Activated T-helper 2 cell treated with anti-CD3 and anti-CD28 coated beads, Interferon-gamma antibody, Interleukin-2, Interleukin-4, amounts not matched to agents 10 μg/mL and 5 μg/mL and 100 μg/mL, durations not matched to agents 14 hours and 24 hours and 36 hours (primary cell): ENCODE measurements at regions of chr2 and their contacts with region 1.

Region 1: DNA sequence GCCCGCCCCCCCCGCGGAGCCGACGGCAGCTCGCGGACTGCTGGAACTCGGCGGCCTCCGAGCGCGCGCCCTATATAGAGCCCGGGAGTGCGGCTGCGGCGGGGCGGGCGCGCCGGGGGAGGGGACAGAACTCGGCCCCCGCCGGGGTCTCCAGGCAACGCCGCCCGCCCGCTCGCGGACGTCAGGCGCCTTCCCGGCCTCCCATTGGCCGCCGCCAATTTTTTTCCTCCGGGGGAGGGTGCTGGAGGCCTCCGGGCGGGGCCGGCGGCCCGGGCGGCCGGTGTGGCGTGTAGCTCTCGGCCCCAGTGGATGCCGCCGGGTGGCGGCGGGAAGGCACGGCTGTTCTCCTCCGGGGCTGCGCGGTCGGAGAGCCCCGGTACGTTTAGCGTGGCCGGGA is at the start of gene ZFP36L2:
- DNase-seq: peak; percentile 95
- H3K4me3 Mint-ChIP-seq: peak within 1 kb of the TSS; percentile 90
- H3K27ac Mint-ChIP-seq: peak within 1 kb of the TSS; percentile 95
- H3K4me1 Mint-ChIP-seq: peaks cover 30% of the 10 kb centered on the region
- H3K27me3 Mint-ChIP-seq: no peaks in the 10 kb centered on the region
- total RNA-seq, gene ZFP36L2: 114 TPM in 2 replicates

Region 2: GRCh38 chr2:42810121-42810970 is 416.2 kb before region 1 on chr2:
- intact Hi-C with region 1: loop called (anchors 5 kb)
- DNase-seq: peak; percentile 94
- H3K4me3 Mint-ChIP-seq: peak overlapping the region; percentile 95
- H3K27ac Mint-ChIP-seq: peak overlapping the region; percentile 100
- H3K4me1 Mint-ChIP-seq: peaks cover 21% of the 10 kb centered on the region
- H3K27me3 Mint-ChIP-seq: no peaks in the 10 kb centered on the region

Region 3: GRCh38 chr2:42944779-42945415 is 281.7 kb before region 1 on chr2:
- intact Hi-C with region 1: loop called (anchors 2 kb)
- DNase-seq: no peak
- H3K4me3 Mint-ChIP-seq: no peak overlapping the region
- H3K27ac Mint-ChIP-seq: no peak overlapping the region
- H3K4me1 Mint-ChIP-seq: peaks cover 3% of the 10 kb centered on the region
- H3K27me3 Mint-ChIP-seq: peaks cover 2% of the 10 kb centered on the region

Region 4: GRCh38 chr2:43158259-43158880 is 68.2 kb before region 1 on chr2:
- intact Hi-C with region 1: loop called (anchors 1 kb)
- DNase-seq: peak; percentile 58
- H3K4me3 Mint-ChIP-seq: peak overlapping the region; percentile 74
- H3K27ac Mint-ChIP-seq: peak overlapping the region; percentile 99
- H3K4me1 Mint-ChIP-seq: peaks cover 39% of the 10 kb centered on the region
- H3K27me3 Mint-ChIP-seq: no peaks in the 10 kb centered on the region

Region 5: GRCh38 chr2:43276962-43277391 is 50.4 kb after region 1 on chr2:
- intact Hi-C with region 1: no loop called
- DNase-seq: no peak
- H3K4me3 Mint-ChIP-seq: no peak overlapping the region
- H3K27ac Mint-ChIP-seq: no peak overlapping the region
- H3K4me1 Mint-ChIP-seq: peaks cover 12% of the 10 kb centered on the region
- H3K27me3 Mint-ChIP-seq: no peaks in the 10 kb centered on the region

Region 6: GRCh38 chr2:43484323-43484930 is 257.9 kb after region 1 on chr2:
- intact Hi-C with region 1: loop called (anchors 1 kb)
- DNase-seq: no peak
- H3K4me3 Mint-ChIP-seq: no peak overlapping the region
- H3K27ac Mint-ChIP-seq: no peak overlapping the region
- H3K4me1 Mint-ChIP-seq: peaks cover 26% of the 10 kb centered on the region
- H3K27me3 Mint-ChIP-seq: no peaks in the 10 kb centered on the region

Region 7: GRCh38 chr2:43773876-43774613 is 547.5 kb after region 1 on chr2 and contains the start of gene DYNC2LI1:
- intact Hi-C with region 1: loop called (anchors 10 kb)
- DNase-seq: peak; percentile 74
- H3K4me3 Mint-ChIP-seq: peak within 1 kb of the TSS; percentile 86
- H3K27ac Mint-ChIP-seq: peak within 1 kb of the TSS; percentile 95
- H3K4me1 Mint-ChIP-seq: peaks cover 31% of the 10 kb centered on the region
- H3K27me3 Mint-ChIP-seq: no peaks in the 10 kb centered on the region
- total RNA-seq, gene DYNC2LI1: 67.7 and 71.6 TPM in 2 replicates